MCF 10A (cell line): ENCODE measurements at regions of chr20 and their contacts with region 1.

Region 1: DNA sequence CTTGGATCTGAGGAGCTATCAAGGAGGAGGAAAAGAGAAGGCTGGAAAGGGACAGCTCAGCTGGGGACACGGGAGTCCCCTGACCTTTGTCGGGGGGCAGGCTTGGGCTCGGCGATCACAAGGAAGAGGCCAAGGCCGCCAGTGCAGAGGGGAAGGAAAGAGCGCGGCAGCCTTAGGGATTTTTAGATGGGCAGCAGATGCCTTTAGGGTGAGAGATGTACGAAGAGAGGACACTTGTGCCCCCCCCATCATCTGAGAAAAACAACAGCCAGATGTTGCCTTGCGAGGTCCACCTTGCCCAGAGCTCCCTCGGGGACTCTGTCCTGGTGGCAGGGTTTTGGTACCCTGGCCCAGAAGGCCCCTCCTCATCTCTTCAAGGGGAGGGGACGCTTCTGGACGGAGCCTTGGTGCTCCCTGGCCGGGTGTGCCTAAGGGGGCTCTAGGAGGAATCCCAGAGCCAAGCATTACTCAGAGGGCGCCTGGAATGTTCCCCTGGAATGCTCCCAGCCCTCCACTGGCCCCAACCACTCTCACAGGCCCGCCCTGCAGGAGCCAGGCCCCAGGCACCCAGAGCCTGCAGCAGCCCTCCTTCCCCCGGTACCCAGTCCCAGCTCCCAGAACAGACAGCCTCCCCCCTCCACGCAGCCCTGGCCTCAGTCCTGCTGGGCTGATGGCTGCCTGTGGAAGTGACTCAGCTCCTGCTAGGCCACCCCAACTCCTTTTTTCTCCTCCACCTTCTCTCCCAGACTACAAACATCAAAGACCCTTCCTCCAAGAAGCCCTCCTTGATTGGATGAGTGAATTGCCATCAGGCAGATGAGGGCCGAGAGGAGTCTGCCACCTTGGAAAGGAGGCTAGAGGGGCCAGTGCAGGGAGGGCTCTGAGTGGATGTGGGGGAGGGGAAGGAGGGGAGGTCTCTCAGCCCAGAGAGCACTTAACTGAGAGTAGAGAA is 1.8 kb downstream of the ADAM33 start:
- DNase-seq: no peak
- H3K4me3 Mint-ChIP-seq: no peak overlapping the region
- H3K27ac Mint-ChIP-seq: no peak overlapping the region
- H3K4me1 Mint-ChIP-seq: no peaks in the 10 kb centered on the region
- H3K27me3 Mint-ChIP-seq: peaks cover 19% of the 10 kb centered on the region
- CTCF ChIP-seq: no peak

Region 2: GRCh38 chr20:3710703-3711483 is 30.9 kb after region 1 on chr20:
- CTCF ChIA-PET with region 1: interaction called, 154 read pairs
- POLR2A ChIA-PET with region 1: interaction called, 11 read pairs
- intact Hi-C with region 1: loop called (anchors 1 kb)
- DNase-seq: peak; percentile 60
- H3K4me3 Mint-ChIP-seq: no peak overlapping the region
- H3K27ac Mint-ChIP-seq: no peak overlapping the region
- H3K4me1 Mint-ChIP-seq: no peaks in the 10 kb centered on the region
- H3K27me3 Mint-ChIP-seq: no peaks in the 10 kb centered on the region
- CTCF ChIP-seq: peak; percentile 92

Region 3: DNA sequence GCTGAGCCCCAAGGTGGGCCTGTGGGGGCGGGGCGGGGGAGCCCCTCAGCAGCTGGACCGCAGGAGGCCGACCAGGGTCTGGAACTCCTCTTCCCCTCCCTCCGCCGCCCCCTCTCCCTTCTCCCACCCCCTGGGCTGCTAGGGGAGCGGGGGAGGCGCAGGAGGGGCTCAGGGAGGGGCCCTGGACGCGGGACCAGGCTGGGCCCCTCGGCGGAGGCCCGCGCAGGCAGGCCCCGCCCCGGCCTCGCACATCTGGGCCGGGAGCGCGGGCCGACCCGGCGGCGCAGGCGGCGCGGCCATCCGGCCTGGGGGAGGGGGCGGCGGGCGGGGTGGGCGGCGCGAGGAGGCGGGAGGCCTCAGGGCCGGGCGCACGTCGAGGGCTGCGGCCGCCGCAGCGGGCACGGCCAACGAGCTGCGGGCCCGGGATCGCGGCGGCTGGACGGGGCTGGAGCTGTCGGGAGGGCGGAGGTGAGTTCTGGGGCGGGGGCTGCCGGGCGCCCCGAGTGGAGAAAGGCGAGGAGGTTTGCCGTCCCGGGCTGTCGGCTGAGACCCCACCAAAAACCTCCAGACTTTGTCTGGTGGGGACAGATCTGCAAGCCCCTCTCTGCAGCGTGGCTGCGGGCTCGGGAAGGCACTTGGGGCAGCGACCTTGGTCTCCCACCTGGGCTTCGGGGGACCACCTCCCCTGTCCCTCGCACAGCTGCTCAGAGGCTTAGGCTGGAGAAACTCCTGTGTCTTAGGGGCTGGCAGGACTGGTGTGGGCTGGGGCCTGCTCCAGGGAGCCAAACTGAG is 52.5 kb after region 1 on chr20 and contains the start of gene HSPA12B:
- CTCF ChIA-PET with region 1: interaction called, 13 read pairs
- POLR2A ChIA-PET with region 1: no interaction called
- intact Hi-C with region 1: no loop called
- DNase-seq: no peak
- H3K4me3 Mint-ChIP-seq: no peak within 1 kb of the TSS
- H3K27ac Mint-ChIP-seq: no peak within 1 kb of the TSS
- H3K4me1 Mint-ChIP-seq: peaks cover 23% of the 10 kb centered on the region
- H3K27me3 Mint-ChIP-seq: peaks cover 4% of the 10 kb centered on the region
- CTCF ChIP-seq: no peak
- total RNA-seq, gene HSPA12B: not detected in 2 replicates

Region 4: GRCh38 chr20:3753098-3753980 is 73.3 kb after region 1 on chr20:
- CTCF ChIA-PET with region 1: interaction called, 10 read pairs
- POLR2A ChIA-PET with region 1: no interaction called
- intact Hi-C with region 1: no loop called
- DNase-seq: peak; percentile 72
- H3K4me3 Mint-ChIP-seq: no peak overlapping the region
- H3K27ac Mint-ChIP-seq: no peak overlapping the region
- H3K4me1 Mint-ChIP-seq: no peaks in the 10 kb centered on the region
- H3K27me3 Mint-ChIP-seq: no peaks in the 10 kb centered on the region
- CTCF ChIP-seq: peak; percentile 78

Region 5: DNA sequence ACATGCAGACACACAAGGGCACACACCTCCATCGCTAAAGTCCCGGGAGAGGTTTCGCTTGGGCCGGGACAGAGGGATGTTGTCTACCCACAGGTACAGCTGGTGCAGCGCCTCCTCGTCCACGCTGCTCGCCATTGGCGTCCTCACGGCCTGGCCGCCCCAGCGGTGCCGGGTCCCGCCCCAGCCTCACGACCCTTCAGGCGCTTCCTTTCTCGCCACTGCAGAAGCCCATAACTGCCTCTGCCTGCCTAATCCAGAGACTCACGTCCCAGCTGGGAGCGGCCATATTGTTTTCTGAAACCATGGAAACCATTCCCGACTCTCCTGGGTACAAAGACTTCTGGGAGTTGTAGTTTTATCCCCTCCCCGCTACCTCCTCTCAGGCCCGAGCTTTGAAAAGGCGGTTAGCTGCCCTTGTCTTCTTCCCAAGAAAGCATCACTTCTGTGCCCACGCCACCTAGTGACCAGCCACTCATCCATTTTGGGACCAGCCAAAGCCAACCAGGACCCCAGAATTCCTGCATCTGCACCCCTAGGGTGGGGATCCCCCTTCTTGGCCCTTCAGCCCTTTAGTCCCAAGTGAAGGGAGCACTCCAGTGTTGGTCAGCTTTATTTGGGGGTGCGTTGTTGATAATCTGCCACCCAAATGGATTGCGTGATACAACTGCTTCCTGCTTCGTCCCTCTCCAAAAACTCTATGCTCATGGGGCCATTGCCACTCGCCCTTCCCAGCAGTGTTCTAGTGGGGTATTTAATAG is 101.3 kb after region 1 on chr20 and contains the start of gene SPEF1:
- CTCF ChIA-PET with region 1: interaction called, 6 read pairs
- POLR2A ChIA-PET with region 1: interaction called, 7 read pairs
- intact Hi-C with region 1: loop called (anchors 1 kb)
- DNase-seq: peak; percentile 95
- H3K4me3 Mint-ChIP-seq: peak within 1 kb of the TSS; percentile 73
- H3K27ac Mint-ChIP-seq: peak within 1 kb of the TSS; percentile 87
- H3K4me1 Mint-ChIP-seq: peaks cover 34% of the 10 kb centered on the region
- H3K27me3 Mint-ChIP-seq: no peaks in the 10 kb centered on the region
- CTCF ChIP-seq: peak; percentile 26
- total RNA-seq, gene SPEF1: 0.32 TPM in 1 of 2 replicates, not detected in the other

Region 6: GRCh38 chr20:3911956-3912355 is 231.9 kb after region 1 on chr20:
- CTCF ChIA-PET with region 1: no interaction called
- POLR2A ChIA-PET with region 1: no interaction called
- intact Hi-C with region 1: no loop called
- DNase-seq: no peak
- H3K4me3 Mint-ChIP-seq: no peak overlapping the region
- H3K27ac Mint-ChIP-seq: no peak overlapping the region
- H3K4me1 Mint-ChIP-seq: peaks cover 7% of the 10 kb centered on the region
- H3K27me3 Mint-ChIP-seq: no peaks in the 10 kb centered on the region
- CTCF ChIP-seq: no peak